ENCODE measurements at regions of chr13 and their contacts with region 1.

Region 1: GRCh38 chr13:48400850-48401291 is 12.0 kb downstream of the LPAR6 start:
- DNase-seq: no peak
- H3K4me3 Mint-ChIP-seq: no peak overlapping the region
- H3K27ac Mint-ChIP-seq: peak overlapping the region; percentile 9
- H3K4me1 Mint-ChIP-seq: peaks cover 58% of the 10 kb centered on the region
- H3K27me3 Mint-ChIP-seq: no peaks in the 10 kb centered on the region

Region 2: GRCh38 chr13:48199499-48199898 is 201.4 kb before region 1 on chr13:
- CTCF ChIA-PET with region 1: no interaction called
- intact Hi-C with region 1: no loop called
- DNase-seq: peak; percentile 6
- H3K4me3 Mint-ChIP-seq: no peak overlapping the region
- H3K27ac Mint-ChIP-seq: no peak overlapping the region
- H3K4me1 Mint-ChIP-seq: peaks cover 18% of the 10 kb centered on the region
- H3K27me3 Mint-ChIP-seq: no peaks in the 10 kb centered on the region

Region 3: GRCh38 chr13:48222358-48223301 is 178.2 kb before region 1 on chr13:
- CTCF ChIA-PET with region 1: no interaction called
- intact Hi-C with region 1: loop called (anchors 5 kb)
- DNase-seq: no peak
- H3K4me3 Mint-ChIP-seq: no peak overlapping the region
- H3K27ac Mint-ChIP-seq: peak overlapping the region; percentile 5
- H3K4me1 Mint-ChIP-seq: peaks cover 55% of the 10 kb centered on the region
- H3K27me3 Mint-ChIP-seq: no peaks in the 10 kb centered on the region

Region 4: GRCh38 chr13:48334534-48335127 is 66.2 kb before region 1 on chr13:
- CTCF ChIA-PET with region 1: no interaction called
- intact Hi-C with region 1: loop called (anchors 2 kb)
- DNase-seq: no peak
- H3K4me3 Mint-ChIP-seq: no peak overlapping the region
- H3K27ac Mint-ChIP-seq: no peak overlapping the region
- H3K4me1 Mint-ChIP-seq: peaks cover 3% of the 10 kb centered on the region
- H3K27me3 Mint-ChIP-seq: no peaks in the 10 kb centered on the region

Region 5: DNA sequence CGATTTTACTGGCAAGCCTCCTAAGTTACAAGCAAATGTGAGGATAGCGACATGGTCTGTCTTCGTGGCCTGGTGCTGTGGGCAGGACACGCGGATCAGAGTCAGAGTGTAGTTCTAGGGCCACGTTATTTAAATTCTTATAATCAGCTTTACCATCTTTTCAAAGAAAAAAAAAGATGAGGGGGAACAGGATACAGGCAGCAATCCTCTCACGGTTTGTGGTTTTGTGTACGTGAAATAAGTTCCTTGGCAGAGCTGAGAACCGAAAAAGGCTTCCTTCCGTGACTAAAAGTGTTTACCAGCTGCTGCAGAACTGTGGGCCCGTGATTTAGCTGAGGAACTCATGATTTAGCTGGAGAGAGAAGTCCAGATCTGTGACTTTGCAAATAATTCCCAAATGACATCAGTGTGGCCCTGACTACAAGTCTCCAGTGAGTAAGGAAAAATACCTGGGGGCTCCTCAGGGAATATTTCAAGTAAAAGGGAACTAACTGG is 104.8 kb after region 1 on chr13:
- CTCF ChIA-PET with region 1: no interaction called
- intact Hi-C with region 1: loop called (anchors 2 kb)
- DNase-seq: peak; percentile 70
- H3K4me3 Mint-ChIP-seq: peak overlapping the region; percentile 59
- H3K27ac Mint-ChIP-seq: peak overlapping the region; percentile 75
- H3K4me1 Mint-ChIP-seq: peaks cover 56% of the 10 kb centered on the region
- H3K27me3 Mint-ChIP-seq: no peaks in the 10 kb centered on the region

Region 6: DNA sequence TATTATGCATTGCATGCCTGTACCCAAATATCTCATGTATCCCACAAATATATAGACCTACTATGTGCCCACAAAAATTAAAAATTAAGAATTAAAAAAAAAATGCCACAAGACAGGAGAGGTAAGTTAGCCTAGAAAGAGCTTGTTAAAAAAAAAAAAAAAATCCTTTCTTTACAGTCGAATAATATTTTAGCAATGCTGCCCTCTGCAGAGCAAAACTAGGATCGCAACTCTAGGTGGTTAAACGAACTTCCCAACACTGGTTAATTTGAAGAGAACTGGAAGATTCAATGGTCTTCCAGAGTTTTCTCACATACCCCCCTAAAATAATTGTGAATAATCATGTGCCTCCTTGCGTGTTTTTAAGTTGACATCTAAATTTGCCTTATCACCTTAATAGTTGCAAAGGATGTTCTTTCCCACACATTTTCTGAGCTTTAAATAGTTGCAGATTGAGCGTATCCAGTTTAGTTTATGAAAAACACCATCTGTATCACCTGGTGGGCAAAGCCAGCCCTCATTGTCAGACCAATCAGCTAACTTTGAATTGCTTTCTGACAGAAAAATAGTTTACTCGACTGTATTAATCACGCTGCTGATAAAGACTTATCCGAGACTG is 179.4 kb after region 1 on chr13:
- CTCF ChIA-PET with region 1: interaction called, 6 read pairs
- intact Hi-C with region 1: loop called (anchors 1 kb)
- DNase-seq: peak; percentile 88
- H3K4me3 Mint-ChIP-seq: no peak overlapping the region
- H3K27ac Mint-ChIP-seq: no peak overlapping the region
- H3K4me1 Mint-ChIP-seq: peaks cover 2% of the 10 kb centered on the region
- H3K27me3 Mint-ChIP-seq: peaks cover 6% of the 10 kb centered on the region

Region 7: GRCh38 chr13:48769107-48769704 is 368.3 kb after region 1 on chr13:
- CTCF ChIA-PET with region 1: no interaction called
- intact Hi-C with region 1: loop called (anchors 1 kb)
- DNase-seq: peak; percentile 93
- H3K4me3 Mint-ChIP-seq: no peak overlapping the region
- H3K27ac Mint-ChIP-seq: no peak overlapping the region
- H3K4me1 Mint-ChIP-seq: peaks cover 15% of the 10 kb centered on the region
- H3K27me3 Mint-ChIP-seq: peaks cover 4% of the 10 kb centered on the region